CD8-positive, alpha-beta T cell (primary cell): ENCODE measurements at regions of chr14 and their contacts with region 1.

Region 1: DNA sequence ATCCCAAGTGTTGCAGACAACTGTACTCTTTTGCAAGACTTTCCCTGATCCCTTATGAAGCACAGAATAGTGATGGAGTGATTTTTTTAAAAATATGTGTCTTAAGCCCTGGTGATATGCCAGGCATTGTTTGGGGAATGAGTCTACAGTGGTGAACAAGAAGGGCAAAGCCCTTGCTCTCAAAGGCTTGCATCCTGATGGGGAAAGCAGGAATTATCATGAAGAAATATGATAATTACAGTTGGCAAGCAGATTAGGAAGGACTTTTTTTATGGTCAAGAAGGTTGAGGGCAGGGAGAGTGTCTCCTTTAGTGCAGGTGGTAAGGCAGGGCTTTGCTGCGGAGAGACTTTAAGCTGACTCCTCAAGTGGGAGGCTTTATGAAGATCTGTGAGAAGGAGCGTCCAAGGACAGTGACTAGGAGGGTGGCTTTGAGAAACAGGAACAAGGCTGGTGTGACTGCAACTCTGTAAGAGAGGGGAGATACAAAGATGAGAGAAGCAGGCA is 100.2 kb downstream of the SYNE2 start:
- DNase-seq: no peak
- ATAC-seq: no peak
- H3K4me3 ChIP-seq: no peak overlapping the region
- H3K4me3 Mint-ChIP-seq: no peak overlapping the region
- H3K27ac ChIP-seq: no peak overlapping the region
- H3K27ac Mint-ChIP-seq: peak overlapping the region; percentile 69
- H3K4me1 ChIP-seq: no peaks in the 10 kb centered on the region
- H3K4me1 Mint-ChIP-seq: peaks cover 2% of the 10 kb centered on the region
- H3K27me3 ChIP-seq: no peaks in the 10 kb centered on the region
- H3K27me3 Mint-ChIP-seq: no peaks in the 10 kb centered on the region
- CTCF ChIP-seq: no peak

Region 2: DNA sequence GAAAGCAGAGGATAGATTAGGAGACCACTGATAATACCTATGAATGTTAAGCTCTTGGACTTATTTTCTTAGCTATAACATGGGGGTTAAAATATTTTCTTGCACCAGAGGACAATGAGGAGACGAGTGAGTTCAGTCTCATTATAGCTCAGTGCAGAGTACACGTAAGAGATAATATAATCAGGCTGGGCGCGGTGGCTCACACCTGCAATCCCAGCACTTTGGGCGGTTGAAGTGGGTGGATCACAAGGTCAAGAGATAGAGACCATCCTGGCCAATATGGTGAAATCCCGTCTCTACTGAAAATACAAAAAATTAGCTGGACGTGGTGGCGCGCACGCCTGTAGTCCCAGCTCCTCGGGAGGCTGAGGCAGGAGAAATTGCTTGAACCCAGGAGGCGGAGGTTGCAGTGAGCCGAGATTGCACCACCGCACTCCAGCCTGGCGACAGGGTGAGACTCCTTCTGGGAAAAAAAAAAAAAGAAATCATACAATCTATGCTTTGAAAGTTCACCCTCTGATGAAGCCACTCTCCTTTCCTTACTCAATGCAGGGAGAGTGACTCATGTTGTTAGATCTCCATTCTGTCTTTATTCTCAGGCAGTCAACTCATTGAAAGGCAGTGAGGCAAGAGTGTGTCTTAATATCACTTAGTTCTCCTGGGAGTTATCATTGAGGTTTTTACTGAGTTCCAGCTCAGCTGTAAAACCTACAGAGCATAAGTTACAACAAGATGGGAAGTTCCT is 34.0 kb after region 1 on chr14:
- CTCF ChIA-PET with region 1: no interaction called
- POLR2A ChIA-PET with region 1: no interaction called
- intact Hi-C with region 1: loop called in 1 of 2 experiments (anchors 5 kb)
- DNase-seq: no peak
- ATAC-seq: no peak
- H3K4me3 ChIP-seq: no peak overlapping the region
- H3K4me3 Mint-ChIP-seq: no peak overlapping the region
- H3K27ac ChIP-seq: no peak overlapping the region
- H3K27ac Mint-ChIP-seq: no peak overlapping the region
- H3K4me1 ChIP-seq: no peaks in the 10 kb centered on the region
- H3K4me1 Mint-ChIP-seq: peaks cover 2% of the 10 kb centered on the region
- H3K27me3 ChIP-seq: no peaks in the 10 kb centered on the region
- H3K27me3 Mint-ChIP-seq: no peaks in the 10 kb centered on the region
- CTCF ChIP-seq: no peak

Region 3: DNA sequence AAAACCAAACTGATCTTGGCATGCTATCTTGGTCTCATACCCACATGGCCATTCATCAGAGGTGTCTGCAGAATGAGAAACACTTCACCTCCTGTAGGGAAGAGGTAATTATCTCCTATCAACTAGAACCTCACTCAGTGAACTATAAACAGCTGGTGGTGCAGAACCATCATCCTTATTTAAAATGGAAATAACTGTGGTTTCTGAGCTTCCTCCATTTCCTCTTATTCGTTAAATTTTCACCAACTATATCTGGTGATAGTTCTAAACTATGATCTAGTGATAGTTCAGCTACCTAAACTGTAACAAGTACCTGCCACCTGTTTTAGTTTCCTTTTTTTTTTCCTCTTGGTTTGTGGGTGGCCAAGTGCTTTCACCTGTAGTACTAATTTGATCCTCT is 1678.1 kb after region 1 on chr14:
- CTCF ChIA-PET with region 1: no interaction called
- POLR2A ChIA-PET with region 1: no interaction called
- intact Hi-C with region 1: no loop called
- DNase-seq: no peak
- ATAC-seq: no peak
- H3K4me3 ChIP-seq: no peak overlapping the region
- H3K4me3 Mint-ChIP-seq: no peak overlapping the region
- H3K27ac ChIP-seq: no peak overlapping the region
- H3K27ac Mint-ChIP-seq: no peak overlapping the region
- H3K4me1 ChIP-seq: no peaks in the 10 kb centered on the region
- H3K4me1 Mint-ChIP-seq: peaks cover 17% of the 10 kb centered on the region
- H3K27me3 ChIP-seq: no peaks in the 10 kb centered on the region
- H3K27me3 Mint-ChIP-seq: no peaks in the 10 kb centered on the region
- CTCF ChIP-seq: no peak